ENCODE measurements at regions of chr14 and their contacts with region 1.

Region 1: GRCh38 chr14:54756656-54757392 is 145.8 kb downstream of the GCH1 start:
- DNase-seq: peak; percentile 61

Region 2: DNA sequence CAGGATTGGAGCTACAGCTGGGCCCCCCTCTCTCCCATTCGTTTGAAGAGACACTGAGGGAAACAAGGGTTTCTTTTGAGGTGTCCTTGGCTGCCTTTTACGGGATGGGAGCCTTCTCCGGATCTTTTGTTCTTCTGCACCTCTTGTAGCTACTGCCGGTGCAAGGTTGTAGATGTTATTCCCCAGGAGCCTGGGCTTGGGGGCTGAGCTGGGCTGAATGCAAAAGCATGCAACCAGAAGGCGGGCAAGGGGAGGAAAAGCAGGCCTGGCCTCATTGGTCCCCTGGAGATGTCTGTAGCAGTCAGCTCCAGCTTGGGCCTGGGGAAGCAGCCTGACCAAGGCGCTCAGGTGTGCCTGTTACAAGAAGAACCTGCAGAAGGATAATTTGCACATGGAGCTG is 35.5 kb after region 1 on chr14:
- in situ Hi-C with region 1: loop called (anchors 5 kb)
- DNase-seq: no peak

Region 3: GRCh38 chr14:54818201-54819133 is 61.6 kb after region 1 on chr14:
- in situ Hi-C with region 1: no loop called
- DNase-seq: peak; percentile 8

Measured in G401 (cell line).